ENCODE measurements at regions of chr2 and their contacts with region 1.

Region 1: DNA sequence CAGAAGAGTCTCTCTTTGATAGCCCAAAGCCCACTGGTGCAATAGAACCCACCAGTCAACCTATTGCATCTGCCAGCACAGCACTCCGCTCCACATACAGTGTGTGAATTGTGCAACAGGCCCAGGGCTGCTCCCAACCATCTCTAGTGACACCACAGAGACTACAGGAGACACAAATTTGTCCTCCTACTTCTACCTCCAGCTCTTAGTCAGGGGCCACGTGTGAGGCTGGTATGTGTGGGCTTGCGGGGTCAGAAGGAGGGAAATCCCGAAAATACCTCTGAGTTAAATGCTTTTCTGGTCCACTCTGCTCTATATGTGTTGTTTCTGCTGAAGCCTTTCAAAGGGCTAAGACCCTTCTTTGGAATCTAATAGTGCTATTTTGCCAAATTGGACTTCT is 18.0 kb downstream of the DGUOK start:
- DNase-seq: no peak

Region 2: DNA sequence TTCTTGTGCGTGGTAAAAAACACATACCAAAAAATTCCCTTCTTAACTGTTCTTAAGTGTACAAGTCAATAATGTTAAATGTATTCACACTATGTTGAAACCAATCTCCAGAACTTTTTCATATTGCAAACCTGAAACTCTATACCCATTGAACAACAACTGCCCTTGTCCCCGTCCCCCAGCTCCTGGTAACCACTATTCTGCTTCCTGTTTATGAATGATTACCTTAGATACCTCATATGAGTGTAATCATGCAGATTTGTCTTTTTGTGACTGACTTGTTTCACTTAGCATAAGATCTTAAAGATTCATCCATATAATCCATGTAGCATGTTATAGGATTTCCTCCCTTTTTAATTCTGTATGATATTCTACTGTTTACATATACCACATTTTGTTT is 362.4 kb before region 1 on chr2:
- intact Hi-C with region 1: loop called in 1 of 2 experiments (anchors 5 kb)
- DNase-seq: no peak

Region 3: DNA sequence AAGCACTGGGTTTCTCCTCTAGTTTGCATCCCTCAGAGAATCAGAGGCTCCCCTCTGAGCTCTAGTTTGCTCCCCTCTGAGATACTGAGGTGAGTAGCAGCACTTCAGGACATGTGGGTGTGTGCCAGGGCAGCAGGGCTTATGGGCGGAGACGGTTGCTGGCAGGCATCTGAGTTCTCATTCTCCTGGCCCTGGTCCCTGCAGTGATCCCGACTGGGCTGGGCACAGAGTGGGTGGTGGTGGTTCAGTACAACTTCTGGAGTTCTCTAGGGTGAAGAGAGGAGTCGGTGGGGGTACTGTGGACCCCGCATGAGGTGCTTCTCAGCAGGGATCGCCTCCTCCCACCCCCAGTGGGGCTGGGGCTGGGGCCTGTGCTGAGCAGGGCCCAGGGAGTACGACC is 155.1 kb after region 1 on chr2:
- intact Hi-C with region 1: loop called in 1 of 2 experiments (anchors 1 kb)
- DNase-seq: no peak